ENCODE measurements at regions of chr1 and their contacts with region 1.

Region 1: GRCh38 chr1:101178688-101179491 is 57.9 kb upstream of the S1PR1 start:
- DNase-seq: peak; percentile 29
- H3K4me3 Mint-ChIP-seq: peak overlapping the region; percentile 81
- H3K27ac Mint-ChIP-seq: peak overlapping the region; percentile 100
- H3K4me1 Mint-ChIP-seq: peaks cover 71% of the 10 kb centered on the region
- H3K27me3 Mint-ChIP-seq: no peaks in the 10 kb centered on the region

Region 2: DNA sequence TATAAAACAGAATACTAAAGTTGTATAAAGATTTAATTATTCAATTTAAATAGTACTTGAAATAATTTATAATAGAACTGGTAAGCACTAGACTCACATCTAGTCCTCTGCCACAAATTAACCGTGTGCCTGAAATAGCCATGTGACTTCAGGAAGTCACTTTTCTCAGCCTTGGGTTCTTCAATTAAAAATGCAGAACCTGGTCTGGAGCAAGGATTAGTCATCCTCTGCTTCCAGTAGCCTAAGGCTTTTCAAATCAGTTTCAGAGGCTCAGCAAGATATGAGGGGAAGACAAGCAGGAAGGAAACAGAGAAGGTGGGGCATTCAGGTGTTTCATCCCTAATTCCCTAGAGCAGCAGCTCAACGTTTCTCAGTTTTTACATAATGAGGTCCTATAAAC is 176.3 kb before region 1 on chr1:
- intact Hi-C with region 1: loop called (anchors 1 kb)
- DNase-seq: no peak
- H3K4me3 Mint-ChIP-seq: no peak overlapping the region
- H3K27ac Mint-ChIP-seq: no peak overlapping the region
- H3K4me1 Mint-ChIP-seq: peaks cover 32% of the 10 kb centered on the region
- H3K27me3 Mint-ChIP-seq: no peaks in the 10 kb centered on the region

Region 3: DNA sequence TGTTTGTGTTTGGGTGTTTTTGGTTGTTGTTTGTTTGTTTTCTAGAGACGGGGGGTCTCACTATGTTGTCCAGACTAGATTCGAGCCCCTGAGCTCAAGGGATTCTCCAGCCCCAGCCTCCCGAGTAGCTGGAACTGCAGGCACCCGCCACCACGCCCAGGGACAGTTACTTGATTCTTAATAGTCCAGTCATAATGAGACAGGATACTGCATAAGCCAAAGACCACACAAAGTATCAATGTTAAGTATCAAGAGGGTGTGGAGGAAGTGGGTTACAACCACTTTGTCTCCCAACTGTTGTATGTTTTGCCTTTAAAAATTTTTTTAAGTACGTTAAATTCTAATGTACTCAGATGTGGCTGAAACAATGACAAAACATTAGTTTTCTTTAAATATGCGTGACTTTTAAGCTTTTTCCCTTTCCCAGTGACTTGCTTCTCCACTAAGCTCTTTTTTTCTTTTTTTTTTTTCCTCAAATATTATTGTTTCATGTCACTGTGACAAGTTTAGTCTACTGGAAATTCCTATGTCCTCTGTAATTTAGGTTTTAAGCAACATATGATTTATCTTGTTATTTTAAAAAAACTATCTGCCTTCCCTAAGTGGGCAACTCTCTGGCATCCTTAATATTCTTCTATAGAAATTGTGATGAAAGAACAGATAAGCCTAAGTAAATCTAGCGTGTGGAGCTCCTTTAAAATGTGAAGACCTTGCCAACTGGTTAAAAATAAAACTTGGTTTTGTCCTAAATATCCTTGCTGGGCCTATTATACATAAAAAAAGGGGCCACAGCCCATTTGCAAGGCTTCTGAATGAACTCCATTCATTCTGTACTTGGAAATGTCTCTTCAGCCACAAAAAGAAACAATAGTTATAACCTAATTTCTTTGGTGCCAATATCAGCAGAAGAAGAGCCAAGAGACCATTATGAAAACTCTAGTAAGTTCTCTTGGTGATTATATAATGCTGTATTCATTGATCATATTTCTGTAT is 97.1 kb before region 1 on chr1:
- intact Hi-C with region 1: loop called (anchors 1 kb)
- DNase-seq: peak; percentile 64
- H3K4me3 Mint-ChIP-seq: peak overlapping the region; percentile 0
- H3K27ac Mint-ChIP-seq: peak overlapping the region; percentile 67
- H3K4me1 Mint-ChIP-seq: peaks cover 51% of the 10 kb centered on the region
- H3K27me3 Mint-ChIP-seq: no peaks in the 10 kb centered on the region

Region 4: DNA sequence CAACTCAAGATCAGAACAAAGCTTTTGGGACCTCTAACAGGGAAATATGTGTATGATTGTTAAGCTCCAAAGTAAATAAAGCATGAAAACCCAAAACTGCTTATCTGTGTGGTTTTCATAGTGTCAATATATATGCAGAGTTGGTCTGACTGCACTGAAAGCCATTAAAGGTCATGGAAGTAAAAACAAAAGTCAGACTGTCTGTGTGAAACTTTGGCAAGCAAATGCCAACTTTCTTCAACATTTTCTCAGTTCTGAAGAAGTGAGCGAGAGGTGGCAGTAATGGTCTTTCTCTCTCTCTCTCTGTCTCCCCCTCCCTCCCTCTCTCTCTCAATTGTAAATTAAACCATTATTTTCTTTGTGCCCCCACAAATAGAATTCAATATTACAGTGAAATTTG is 42.2 kb before region 1 on chr1:
- intact Hi-C with region 1: loop called (anchors 1 kb)
- DNase-seq: no peak
- H3K4me3 Mint-ChIP-seq: peak overlapping the region; percentile 47
- H3K27ac Mint-ChIP-seq: peak overlapping the region; percentile 89
- H3K4me1 Mint-ChIP-seq: peaks cover 67% of the 10 kb centered on the region
- H3K27me3 Mint-ChIP-seq: no peaks in the 10 kb centered on the region

Region 5: GRCh38 chr1:101153692-101154091 is 25.2 kb before region 1 on chr1:
- intact Hi-C with region 1: loop called (anchors 1 kb)
- DNase-seq: no peak
- H3K4me3 Mint-ChIP-seq: no peak overlapping the region
- H3K27ac Mint-ChIP-seq: peak overlapping the region; percentile 36
- H3K4me1 Mint-ChIP-seq: peaks cover 44% of the 10 kb centered on the region
- H3K27me3 Mint-ChIP-seq: no peaks in the 10 kb centered on the region

Region 6: DNA sequence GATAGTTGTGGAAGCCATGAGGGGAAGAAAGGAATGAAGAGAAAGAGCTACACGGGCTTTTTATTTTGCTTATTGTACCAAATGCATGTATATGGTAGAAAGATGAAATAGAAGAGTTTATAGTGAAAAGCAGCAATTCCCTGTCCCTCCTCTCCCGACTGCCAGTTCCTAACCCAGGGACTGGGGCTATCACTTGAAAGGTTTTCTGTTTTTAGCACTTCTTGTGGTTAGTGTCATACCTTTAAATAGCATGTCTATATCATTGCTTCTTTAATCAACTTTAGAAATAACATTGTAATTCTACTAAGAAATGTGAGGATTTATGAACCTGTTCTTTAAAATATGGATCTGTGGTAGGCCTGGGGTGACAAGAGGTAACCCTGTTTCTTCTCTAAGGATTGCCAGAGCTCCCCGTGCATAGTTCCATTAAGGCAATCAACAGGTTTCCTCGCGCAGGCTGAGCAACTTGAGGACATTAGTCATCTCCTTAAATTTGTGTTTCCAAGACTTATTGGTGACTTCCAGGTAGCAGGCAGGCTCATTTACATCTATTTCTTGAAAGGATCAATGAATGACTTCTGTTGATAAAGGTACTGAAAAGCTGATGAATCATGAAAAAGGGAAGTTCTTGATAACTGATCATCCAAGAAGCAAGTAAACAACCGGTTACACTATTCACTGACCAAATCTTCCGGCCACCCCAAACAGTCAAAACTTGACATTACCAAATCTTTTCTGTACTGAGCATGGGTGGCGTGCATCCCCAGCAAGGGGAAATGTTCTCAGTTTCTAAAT is 20.1 kb after region 1 on chr1:
- intact Hi-C with region 1: loop called (anchors 1 kb)
- DNase-seq: peak; percentile 51
- H3K4me3 Mint-ChIP-seq: peak overlapping the region; percentile 7
- H3K27ac Mint-ChIP-seq: peak overlapping the region; percentile 85
- H3K4me1 Mint-ChIP-seq: peaks cover 40% of the 10 kb centered on the region
- H3K27me3 Mint-ChIP-seq: no peaks in the 10 kb centered on the region

Measured in activated T-helper 2 cell treated with anti-CD3 and anti-CD28 coated beads, Interferon-gamma antibody, Interleukin-2, Interleukin-4, amounts not matched to agents 10 μg/mL and 5 μg/mL and 100 μg/mL, durations not matched to agents 14 hours and 24 hours and 36 hours (primary cell).